Dendritic cell treated with granulocyte-macrophage colony-stimulating factor and Interleukin-4, amounts not matched to agents 40 ng/mL and 50 ng/mL, for 4 days (primary cell): ENCODE measurements at regions of chr10 and their contacts with region 1.

Region 1: GRCh38 chr10:63629363-63630084 is 108.3 kb downstream of the REEP3 start:
- H3K4me3 Mint-ChIP-seq: peak overlapping the region; percentile 88
- H3K27ac Mint-ChIP-seq: peak overlapping the region; percentile 79
- H3K4me1 Mint-ChIP-seq: peaks cover 42% of the 10 kb centered on the region
- H3K27me3 Mint-ChIP-seq: peaks cover 36% of the 10 kb centered on the region

Region 2: GRCh38 chr10:63166742-63167258 is 462.7 kb before region 1 on chr10:
- intact Hi-C with region 1: loop called (anchors 5 kb)
- H3K4me3 Mint-ChIP-seq: no peak overlapping the region
- H3K27ac Mint-ChIP-seq: no peak overlapping the region
- H3K4me1 Mint-ChIP-seq: peaks cover 5% of the 10 kb centered on the region
- H3K27me3 Mint-ChIP-seq: no peaks in the 10 kb centered on the region

Region 3: GRCh38 chr10:63268798-63269503 is 360.6 kb before region 1 on chr10:
- intact Hi-C with region 1: loop called (anchors 5 kb)
- H3K4me3 Mint-ChIP-seq: peak overlapping the region; percentile 88
- H3K27ac Mint-ChIP-seq: peak overlapping the region; percentile 96
- H3K4me1 Mint-ChIP-seq: peaks cover 19% of the 10 kb centered on the region
- H3K27me3 Mint-ChIP-seq: no peaks in the 10 kb centered on the region

Region 4: DNA sequence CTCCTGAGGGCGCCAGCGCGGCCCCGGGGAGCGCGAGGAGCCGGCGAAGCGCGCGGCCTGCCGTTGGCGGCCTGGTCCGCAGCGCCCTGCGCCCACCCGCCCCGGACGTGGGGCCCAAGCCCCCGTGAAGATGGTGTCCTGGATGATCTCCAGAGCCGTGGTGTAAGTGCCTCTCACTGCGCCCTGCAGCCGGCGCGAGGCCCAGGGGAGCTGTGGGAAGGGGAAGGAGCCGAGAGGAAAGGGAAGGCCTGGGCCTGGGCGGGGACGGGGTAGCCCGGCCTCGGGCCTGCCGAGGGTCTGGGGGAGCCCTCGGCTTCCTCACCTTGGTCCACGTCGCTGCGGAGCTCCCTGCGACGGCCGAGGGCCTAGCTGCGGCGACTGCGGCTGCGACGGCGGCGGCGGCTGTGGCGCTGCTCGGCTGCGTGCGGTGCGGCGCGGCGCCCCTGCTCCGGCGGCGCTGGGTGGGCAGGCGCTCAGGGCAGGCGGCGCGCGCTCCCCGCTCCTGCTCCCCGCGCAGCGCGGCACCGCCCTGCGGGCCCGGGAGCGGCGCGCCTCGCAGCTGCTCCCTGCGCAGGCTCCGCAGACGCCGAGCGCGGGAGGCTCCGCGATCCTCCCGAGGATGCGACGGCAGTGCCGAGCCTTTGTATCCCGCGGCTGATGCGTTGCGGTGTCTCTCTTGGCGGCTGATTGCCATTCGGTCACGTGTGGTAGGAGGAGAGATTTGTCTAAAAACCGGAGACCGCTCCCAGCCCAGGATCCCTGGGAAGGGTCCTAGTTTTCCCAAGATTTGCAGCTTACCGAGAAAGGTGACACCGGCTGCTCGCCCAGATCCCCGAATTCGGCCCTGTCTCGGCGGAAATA is 107.9 kb before region 1 on chr10:
- intact Hi-C with region 1: loop called (anchors 5 kb)
- H3K4me3 Mint-ChIP-seq: peak overlapping the region; percentile 81
- H3K27ac Mint-ChIP-seq: peak overlapping the region; percentile 81
- H3K4me1 Mint-ChIP-seq: peaks cover 40% of the 10 kb centered on the region
- H3K27me3 Mint-ChIP-seq: no peaks in the 10 kb centered on the region

Region 5: GRCh38 chr10:63644418-63645142 is 15.1 kb after region 1 on chr10:
- intact Hi-C with region 1: no loop called
- H3K4me3 Mint-ChIP-seq: no peak overlapping the region
- H3K27ac Mint-ChIP-seq: no peak overlapping the region
- H3K4me1 Mint-ChIP-seq: peaks cover 10% of the 10 kb centered on the region
- H3K27me3 Mint-ChIP-seq: peaks cover 4% of the 10 kb centered on the region

Region 6: DNA sequence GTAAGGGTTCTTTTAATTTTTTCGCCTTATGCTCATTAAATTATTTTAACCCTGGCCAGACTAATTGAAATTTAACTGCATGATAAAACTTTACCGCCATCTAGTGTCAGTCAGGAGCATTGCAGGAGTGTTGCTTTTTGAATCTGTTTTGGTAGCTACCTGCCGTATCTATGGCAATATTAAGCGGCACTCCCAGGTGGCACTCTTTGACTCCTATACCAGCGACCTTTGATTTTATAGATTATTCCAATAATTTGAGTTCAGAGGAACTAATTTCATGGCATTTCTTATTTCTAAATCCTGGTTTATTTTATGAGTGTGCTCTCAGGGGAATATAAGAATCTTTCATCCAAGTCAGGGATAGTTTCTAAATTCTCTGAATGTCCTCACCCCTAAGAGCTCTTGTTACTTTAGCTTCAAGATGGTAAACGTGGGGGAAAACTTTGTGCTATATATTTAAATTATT is 90.6 kb after region 1 on chr10:
- intact Hi-C with region 1: loop called (anchors 2 kb)
- H3K4me3 Mint-ChIP-seq: no peak overlapping the region
- H3K27ac Mint-ChIP-seq: no peak overlapping the region
- H3K4me1 Mint-ChIP-seq: peaks cover 21% of the 10 kb centered on the region
- H3K27me3 Mint-ChIP-seq: peaks cover 9% of the 10 kb centered on the region